ENCODE measurements at regions of chr3 and their contacts with region 1.

Region 1: DNA sequence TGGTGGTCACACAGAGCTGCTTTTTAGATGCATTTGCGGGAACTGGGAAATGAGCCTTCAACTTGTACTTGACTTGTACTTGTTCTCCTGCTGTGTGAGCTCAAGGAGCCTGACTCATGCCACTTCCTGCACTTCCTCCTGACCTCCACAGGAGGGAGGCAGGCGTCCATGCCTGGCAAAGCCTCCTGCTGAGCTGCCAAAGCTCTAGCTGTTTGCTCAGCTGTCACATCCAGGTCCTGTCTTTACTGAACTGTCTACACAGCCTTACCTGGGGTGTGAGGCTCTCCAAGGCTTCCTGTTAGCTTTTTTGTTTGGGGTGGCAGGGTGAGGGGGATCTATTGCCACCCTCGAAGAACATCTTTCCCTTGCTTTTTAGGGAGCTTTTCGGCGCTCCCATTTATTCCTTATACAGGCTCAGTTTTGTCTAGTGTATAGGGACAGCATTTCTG is 6.4 kb downstream of the THPO start:
- DNase-seq: peak; percentile 92
- H3K4me3 ChIP-seq: no peak overlapping the region
- H3K27ac ChIP-seq: no peak overlapping the region
- H3K4me1 ChIP-seq: peaks cover 0 to 11% (median 2%) of the 10 kb centered on the region in 4 donors
- H3K27me3 ChIP-seq: no peaks in the 10 kb centered on the region
- CTCF ChIP-seq: peak; percentile 76 to 87 (median 83)
- EP300 ChIP-seq: no peak
- POLR2A ChIP-seq: no peak

Region 2: DNA sequence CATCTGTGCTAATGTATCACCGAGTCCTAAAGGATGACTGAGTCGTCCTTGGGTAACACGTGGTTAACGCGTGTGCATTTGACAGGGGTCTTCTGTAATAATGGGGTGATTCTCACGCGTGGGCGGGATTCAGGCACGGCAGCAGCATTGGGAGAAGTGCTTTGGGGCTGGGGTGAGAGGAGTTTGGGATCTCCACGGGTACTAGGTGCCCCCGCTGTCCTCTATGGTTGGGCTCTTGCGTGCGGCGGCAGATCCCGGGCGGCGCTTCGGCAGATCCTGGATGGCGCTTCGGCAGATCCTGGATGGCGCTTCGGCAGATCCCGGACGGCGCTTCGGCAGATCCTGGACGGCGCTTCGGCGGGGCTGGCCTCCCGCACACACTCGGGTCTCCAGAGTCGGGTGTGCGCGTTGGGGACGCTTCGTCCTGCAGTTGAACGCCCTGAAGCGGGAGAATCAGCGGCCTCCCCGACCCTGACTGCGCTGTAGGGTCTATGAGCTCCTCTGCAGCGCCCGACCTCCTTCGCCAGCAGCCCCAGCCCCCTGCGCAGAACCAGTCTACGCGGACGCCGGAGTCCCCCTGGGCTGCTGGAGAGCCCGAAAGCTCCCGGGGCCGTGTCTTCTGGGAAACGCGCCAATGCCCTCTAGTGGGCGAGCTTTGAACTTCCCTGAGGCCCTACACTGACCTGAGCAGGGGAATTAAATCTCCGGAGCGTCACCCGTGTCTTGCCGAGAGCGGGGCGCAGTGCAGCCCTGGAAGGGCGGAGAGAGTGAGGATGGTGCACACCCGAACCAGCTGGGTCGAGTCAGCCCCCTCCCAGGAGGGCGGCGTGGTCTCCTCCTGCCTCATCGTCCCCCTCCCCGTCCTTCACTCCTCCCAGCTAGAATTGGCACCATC is 141.9 kb after region 1 on chr3:
- intact Hi-C with region 1: loop called (anchors 2 kb)
- DNase-seq: peak; percentile 92
- H3K4me3 ChIP-seq: peak overlapping the region; percentile 18 to 48 (median 40)
- H3K27ac ChIP-seq: peak overlapping the region in 1 of 4 donors; percentile 16
- H3K4me1 ChIP-seq: peaks cover 0 to 13% (median 11%) of the 10 kb centered on the region in 4 donors
- H3K27me3 ChIP-seq: peaks cover 10 to 60% (median 37%) of the 10 kb centered on the region in 3 donors
- CTCF ChIP-seq: peak; percentile 77 to 85 (median 80)
- EP300 ChIP-seq: no peak
- POLR2A ChIP-seq: no peak

Region 3: DNA sequence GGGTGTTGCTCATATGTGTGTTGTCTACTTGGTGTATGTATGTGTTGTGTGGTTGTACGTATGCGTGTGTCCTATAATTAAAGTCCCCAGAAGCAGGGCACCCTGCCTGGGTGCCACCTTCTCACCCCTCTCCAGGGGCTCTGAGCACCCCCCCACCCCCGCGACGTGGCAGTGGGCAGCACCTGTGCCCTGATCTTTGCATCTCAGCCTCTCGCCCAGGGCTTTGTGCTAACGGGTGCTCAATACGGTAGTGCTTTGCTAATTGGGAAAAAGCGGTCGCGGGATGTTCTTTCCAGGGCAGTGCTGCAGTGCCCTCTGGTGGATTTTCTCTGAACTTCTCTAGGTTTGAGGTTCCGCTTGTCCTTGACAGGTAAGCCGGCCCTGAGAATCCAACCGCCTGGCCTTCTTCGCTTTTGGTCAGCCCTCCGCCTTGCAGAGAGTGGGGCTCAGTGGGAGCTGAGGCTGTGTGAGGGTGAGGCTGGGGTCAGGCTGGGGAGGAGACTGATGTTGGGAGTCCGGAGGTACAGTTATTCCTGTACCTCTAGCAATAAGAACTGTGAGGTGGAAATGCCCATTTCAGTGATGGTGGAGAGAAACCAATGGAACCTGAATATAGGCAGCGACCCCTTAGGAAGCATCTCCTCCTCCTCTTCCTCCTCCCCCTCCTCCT is 172.4 kb after region 1 on chr3:
- intact Hi-C with region 1: loop called (anchors 5 kb)
- DNase-seq: peak; percentile 78
- H3K4me3 ChIP-seq: no peak overlapping the region
- H3K27ac ChIP-seq: no peak overlapping the region
- H3K4me1 ChIP-seq: peaks cover 0 to 7% (median 3%) of the 10 kb centered on the region in 4 donors
- H3K27me3 ChIP-seq: peaks cover 0 to 39% (median 17%) of the 10 kb centered on the region in 3 donors
- CTCF ChIP-seq: peak; percentile 74 to 93 (median 87)
- EP300 ChIP-seq: no peak
- POLR2A ChIP-seq: no peak